ENCODE measurements at regions of chr10 and their contacts with region 1.

Region 1: DNA sequence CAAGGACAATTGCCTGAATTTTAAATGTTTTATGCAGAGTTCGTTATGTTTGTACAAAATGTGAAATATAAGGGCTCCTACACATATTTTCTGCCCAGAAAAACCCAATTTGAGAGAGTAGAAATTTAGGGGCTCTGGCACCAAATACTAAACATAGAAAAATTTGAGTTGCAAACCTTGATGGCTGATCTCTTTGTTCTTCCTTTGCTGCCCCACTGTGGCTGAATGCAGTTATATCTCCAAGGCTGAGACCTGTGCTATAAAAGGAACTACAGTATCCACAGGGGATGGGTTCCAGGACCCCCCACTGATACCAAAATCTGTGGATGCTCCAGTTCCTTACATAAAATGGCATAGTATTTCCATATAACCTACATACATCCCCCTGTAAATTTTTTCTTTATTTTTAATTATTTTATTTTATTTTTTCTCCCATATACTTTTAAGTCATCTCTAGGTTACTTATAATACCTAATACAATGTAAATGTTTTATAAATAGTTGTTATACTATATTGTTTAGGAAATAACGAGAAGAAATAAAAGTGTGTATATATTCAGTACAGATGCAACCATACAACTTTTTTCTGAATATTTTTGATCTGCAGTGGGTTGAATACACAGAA is 22.5 kb downstream of the CFAP43 start:
- DNase-seq: peak; percentile 48
- CTCF ChIP-seq: peak; percentile 53

Region 2: DNA sequence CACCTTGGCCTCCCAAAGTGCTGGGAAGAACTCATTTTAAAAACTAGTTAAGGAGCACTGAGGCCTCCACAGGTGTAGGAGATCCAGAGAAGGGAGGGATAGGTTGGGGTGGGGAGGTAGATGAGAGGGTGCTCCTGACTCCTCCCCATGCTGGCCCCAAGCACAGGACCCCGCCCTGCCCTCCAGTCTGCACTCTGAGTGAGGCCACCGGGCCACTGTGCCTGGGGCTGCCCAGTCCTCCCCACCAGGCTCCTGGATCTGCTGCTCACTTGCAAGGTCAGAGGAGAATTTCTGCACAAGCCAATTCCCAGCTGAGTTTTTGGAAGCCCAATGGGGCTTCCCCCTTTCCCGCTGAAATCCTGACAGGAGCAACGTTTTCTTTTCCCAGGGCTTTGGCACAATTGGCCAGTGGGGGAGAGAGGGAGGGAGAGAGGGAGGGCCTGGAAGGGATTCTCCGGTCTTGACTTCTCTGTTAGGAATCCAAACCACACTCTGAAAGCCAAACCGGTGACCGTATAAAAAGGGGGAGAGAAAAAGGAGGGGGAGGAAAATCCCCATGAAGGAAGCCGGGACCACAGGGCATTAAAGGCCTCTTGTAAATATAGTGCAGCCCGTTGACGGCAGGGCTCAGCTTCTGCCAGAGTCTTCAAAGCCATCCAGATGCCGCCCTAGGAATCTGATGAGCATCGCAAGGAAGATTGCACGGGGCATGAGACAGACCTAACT is 470.5 kb before region 1 on chr10:
- in situ Hi-C with region 1: loop called (anchors 10 kb)
- DNase-seq: no peak
- CTCF ChIP-seq: no peak

Region 3: GRCh38 chr10:103888113-103888841 is 321.4 kb before region 1 on chr10:
- in situ Hi-C with region 1: loop called (anchors 10 kb)
- DNase-seq: peak; percentile 59
- CTCF ChIP-seq: peak; percentile 78

Region 4: DNA sequence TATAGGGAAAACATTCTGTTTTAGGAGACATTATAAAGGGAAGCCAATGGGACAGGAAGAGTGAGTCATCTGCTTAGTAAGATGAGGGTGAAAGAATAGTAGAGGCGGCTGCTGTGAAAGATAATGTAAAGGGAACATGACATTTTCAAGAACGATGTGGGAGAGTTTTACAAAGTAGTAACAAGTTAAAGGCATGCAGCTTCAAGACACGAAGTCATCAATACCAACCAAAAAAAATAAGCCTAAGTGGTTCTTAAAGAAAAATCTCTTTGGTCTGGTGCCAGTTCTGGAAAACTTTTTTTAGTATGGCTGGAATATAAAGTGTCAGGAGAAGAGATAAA is 51.1 kb after region 1 on chr10:
- in situ Hi-C with region 1: no loop called
- DNase-seq: no peak
- CTCF ChIP-seq: no peak

Region 5: DNA sequence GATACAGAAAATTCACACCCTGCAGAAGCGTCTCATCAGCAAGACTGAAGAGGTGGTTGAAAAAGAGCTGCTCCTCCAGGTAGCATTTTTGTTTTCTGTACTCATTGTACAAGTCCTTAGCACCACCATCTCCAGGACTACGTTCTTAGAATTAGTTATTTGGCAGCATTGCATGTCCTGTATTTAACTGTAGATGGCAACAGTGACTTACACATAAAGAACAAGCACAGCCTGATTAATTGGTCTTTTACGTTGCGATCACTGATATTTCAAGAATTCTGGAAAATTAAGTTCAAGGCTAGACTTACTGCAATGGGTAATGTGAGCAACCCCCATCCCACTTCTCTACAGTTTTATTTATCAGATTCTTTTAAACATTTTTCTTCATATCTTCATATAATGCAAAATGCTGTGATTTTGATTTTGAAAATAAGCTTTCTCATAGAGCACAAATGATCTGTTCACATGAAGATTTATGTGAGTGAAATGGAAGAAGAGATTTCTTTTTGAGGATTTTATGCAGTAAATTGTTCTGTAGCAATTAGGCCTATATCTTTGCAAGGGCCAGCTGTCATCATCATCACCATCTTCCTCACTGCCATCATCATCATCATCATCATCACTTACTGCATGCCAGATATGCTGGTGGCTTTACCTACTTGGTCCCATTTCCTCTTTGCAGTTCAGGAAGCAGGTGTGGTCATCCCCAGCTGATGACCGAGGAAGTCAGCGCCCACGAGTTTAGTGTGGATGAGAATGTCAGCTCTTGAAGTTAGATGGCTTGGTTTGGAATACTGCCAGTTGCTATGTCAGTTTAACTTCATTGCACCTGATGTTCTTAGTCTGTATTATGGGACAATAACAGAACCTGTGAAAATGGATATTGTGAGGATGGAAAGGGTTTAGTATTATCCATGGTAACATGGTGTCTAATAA is 197.3 kb after region 1 on chr10:
- in situ Hi-C with region 1: no loop called
- DNase-seq: peak; percentile 16
- CTCF ChIP-seq: peak; percentile 56